ENCODE measurements at regions of chr7 and their contacts with region 1.

Region 1: GRCh38 chr7:98870121-98870651 is 372 bp upstream of the TMEM130 start:
- DNase-seq: peak; percentile 48
- H3K4me3 Mint-ChIP-seq: peak overlapping the region; percentile 80
- H3K27ac Mint-ChIP-seq: no peak overlapping the region
- H3K4me1 Mint-ChIP-seq: no peaks in the 10 kb centered on the region
- H3K27me3 Mint-ChIP-seq: peaks cover 37% of the 10 kb centered on the region

Region 2: GRCh38 chr7:98348709-98349474 is 521.3 kb before region 1 on chr7:
- intact Hi-C with region 1: no loop called
- DNase-seq: no peak
- H3K4me3 Mint-ChIP-seq: no peak overlapping the region
- H3K27ac Mint-ChIP-seq: no peak overlapping the region
- H3K4me1 Mint-ChIP-seq: no peaks in the 10 kb centered on the region
- H3K27me3 Mint-ChIP-seq: no peaks in the 10 kb centered on the region

Region 3: GRCh38 chr7:98831641-98832221 is 38.5 kb before region 1 on chr7:
- intact Hi-C with region 1: loop called (anchors 1 kb)
- DNase-seq: peak; percentile 5
- H3K4me3 Mint-ChIP-seq: no peak overlapping the region
- H3K27ac Mint-ChIP-seq: no peak overlapping the region
- H3K4me1 Mint-ChIP-seq: no peaks in the 10 kb centered on the region
- H3K27me3 Mint-ChIP-seq: no peaks in the 10 kb centered on the region